ENCODE measurements at regions of chr6 and their contacts with region 1.

Region 1: GRCh38 chr6:28683944-28684538 is 158.4 kb downstream of the GPX5 start:
- DNase-seq: peak in 7 of 9 donors; percentile 17 to 50 (median 40)
- ATAC-seq: peak; percentile 80
- H3K4me3 ChIP-seq: no peak overlapping the region
- H3K4me3 Mint-ChIP-seq: no peak overlapping the region
- H3K27ac ChIP-seq: no peak overlapping the region
- H3K27ac Mint-ChIP-seq: no peak overlapping the region
- H3K4me1 ChIP-seq: no peaks in the 10 kb centered on the region
- H3K4me1 Mint-ChIP-seq: peaks cover 0 to 17% (median 0%) of the 10 kb centered on the region in 7 donors
- H3K27me3 ChIP-seq: no peaks in the 10 kb centered on the region
- H3K27me3 Mint-ChIP-seq: peaks cover 66 to 89% (median 80%) of the 10 kb centered on the region in 5 donors

Region 2: DNA sequence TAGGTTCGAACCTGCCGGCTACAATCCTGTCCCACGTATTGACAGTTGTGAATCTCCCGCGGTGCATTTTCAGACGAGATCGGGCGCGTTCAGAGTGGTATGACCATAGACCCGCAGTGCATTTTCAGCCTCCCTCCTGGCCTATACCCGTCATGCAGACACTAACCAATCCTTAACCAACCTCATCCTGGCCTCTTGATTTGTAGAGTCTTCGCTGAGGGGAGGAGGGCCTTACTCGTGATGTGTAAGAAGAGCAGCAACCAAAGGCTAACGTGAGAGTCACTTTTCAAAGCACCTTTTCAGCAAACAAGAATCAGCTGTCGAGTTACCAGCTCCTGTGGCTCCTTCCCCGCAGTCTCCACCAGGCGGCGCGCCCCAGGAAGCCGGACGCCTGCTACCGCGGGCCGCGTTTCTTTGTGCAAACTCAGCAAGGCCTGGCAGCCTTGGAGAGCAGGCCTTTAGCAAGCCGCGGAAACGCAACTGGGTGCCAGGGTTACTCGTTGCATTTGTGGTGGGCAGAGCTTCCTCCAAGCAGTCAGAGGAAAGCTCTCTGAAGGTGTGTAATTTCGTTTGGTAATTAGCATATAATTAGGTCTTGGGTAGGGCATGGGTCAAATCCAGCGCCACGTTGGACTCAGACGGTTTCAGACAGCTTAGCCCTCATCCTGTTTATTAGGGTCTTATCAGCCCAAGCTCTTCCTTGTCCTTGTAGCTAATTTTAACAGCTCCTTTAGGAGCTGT is 911.6 kb before region 1 on chr6:
- CTCF ChIA-PET with region 1: no interaction called
- POLR2A ChIA-PET with region 1: no interaction called
- intact Hi-C with region 1: loop called in 1 of 2 experiments (anchors 5 kb)
- DNase-seq: peak; percentile 72 to 88 (median 82)
- ATAC-seq: peak; percentile 98
- H3K4me3 ChIP-seq: no peak overlapping the region
- H3K4me3 Mint-ChIP-seq: peak overlapping the region in 6 of 10 donors; percentile 14 to 59 (median 34)
- H3K27ac ChIP-seq: no peak overlapping the region
- H3K27ac Mint-ChIP-seq: peak overlapping the region in 2 of 9 donors; percentile 7 to 8
- H3K4me1 ChIP-seq: peaks cover 3 to 5% of the 10 kb centered on the region in 2 donors
- H3K4me1 Mint-ChIP-seq: peaks cover 6 to 20% (median 7%) of the 10 kb centered on the region in 7 donors
- H3K27me3 ChIP-seq: no peaks in the 10 kb centered on the region
- H3K27me3 Mint-ChIP-seq: peaks cover 1 to 35% (median 10%) of the 10 kb centered on the region in 5 donors

Region 3: DNA sequence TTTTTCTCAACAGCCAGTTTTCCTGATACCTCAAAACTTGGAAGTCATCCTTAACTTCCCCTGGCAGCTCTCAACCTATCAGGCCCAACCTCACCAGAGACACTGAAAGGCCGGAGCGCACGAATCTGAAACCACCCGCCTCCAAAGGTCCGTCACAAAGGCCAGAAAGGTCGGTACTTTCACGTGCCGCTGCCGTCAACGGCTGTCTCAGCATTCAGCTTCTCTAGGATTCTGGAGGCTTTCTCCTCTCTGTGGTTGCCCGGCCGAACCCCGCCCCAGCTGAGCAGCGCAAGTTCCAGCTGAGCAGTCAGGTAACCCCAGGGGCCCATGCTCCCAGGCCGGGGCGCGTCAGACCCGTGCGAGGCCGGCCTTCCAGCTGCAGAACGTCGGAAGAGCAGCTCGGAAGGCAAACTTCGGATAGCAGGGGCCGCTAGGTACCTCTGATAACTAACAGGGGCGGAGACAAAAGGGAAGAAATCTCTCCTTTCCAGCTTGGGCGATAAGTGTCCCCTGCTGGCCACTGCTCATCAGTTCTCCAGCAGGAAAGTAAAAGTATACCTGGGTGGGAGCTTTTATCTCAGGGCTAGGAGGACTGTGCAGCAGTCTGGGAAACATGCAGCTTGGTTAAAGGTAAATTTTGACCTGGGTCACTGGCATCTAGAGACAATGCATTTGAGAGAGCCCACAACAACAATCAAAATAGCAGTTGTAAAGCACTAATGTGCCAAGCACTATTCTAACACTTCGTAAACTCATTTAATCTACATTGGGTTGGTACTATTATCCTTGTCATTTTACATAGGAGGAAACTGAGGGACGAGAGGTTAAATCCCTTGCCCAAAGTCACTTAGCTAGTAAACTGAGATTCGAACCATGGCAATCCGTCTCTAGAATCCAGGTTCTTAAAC is 300.6 kb before region 1 on chr6:
- CTCF ChIA-PET with region 1: no interaction called
- POLR2A ChIA-PET with region 1: no interaction called
- intact Hi-C with region 1: no loop called
- DNase-seq: peak in 8 of 9 donors; percentile 7 to 45 (median 24)
- ATAC-seq: peak; percentile 92
- H3K4me3 ChIP-seq: peak overlapping the region; percentile 22
- H3K4me3 Mint-ChIP-seq: peak overlapping the region; percentile 76 to 86 (median 82)
- H3K27ac ChIP-seq: no peak overlapping the region
- H3K27ac Mint-ChIP-seq: peak overlapping the region in 7 of 9 donors; percentile 24 to 83 (median 40)
- H3K4me1 ChIP-seq: no peaks in the 10 kb centered on the region
- H3K4me1 Mint-ChIP-seq: peaks cover 15 to 54% (median 34%) of the 10 kb centered on the region in 7 donors
- H3K27me3 ChIP-seq: no peaks in the 10 kb centered on the region
- H3K27me3 Mint-ChIP-seq: no peaks in the 10 kb centered on the region

Region 4: DNA sequence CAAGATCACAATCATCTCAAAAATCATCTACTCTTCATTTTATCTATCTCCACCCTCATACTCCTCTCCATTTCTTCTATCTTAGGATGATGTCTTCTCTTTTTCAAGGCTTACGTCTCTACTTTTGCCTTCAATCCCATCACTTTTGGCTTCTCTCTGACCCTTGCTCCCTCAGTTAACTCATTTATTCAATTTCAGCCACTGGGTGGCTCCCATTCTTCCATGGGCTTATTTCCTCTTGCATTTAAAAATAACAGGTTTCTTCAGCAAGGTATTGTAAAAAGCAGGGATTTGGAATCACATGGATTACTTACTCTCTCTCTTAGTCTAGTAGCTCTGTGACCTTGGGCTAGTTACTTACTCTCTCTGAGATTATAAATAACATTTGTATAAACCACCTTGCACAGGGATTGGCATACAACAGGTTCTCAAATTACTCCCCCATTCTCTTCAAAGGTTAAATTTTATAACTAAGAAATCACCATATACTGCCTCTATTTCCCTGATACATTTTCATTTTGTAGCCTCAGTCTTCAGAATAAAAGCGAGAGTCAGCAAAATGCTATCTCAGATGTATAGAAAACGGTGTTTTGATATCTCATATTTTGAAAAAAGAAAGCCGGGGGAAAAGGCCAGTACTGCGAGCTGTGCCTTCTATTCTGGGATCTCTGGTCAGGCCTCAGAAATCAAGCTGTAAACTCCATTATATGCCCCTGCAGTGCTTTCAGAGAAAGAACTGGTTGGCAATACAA is 290.0 kb before region 1 on chr6:
- CTCF ChIA-PET with region 1: no interaction called
- POLR2A ChIA-PET with region 1: no interaction called
- intact Hi-C with region 1: loop called in 1 of 2 experiments (anchors 1 kb)
- DNase-seq: peak in 2 of 9 donors; percentile 12 to 18
- ATAC-seq: no peak
- H3K4me3 ChIP-seq: no peak overlapping the region
- H3K4me3 Mint-ChIP-seq: no peak overlapping the region
- H3K27ac ChIP-seq: no peak overlapping the region
- H3K27ac Mint-ChIP-seq: peak overlapping the region in 1 of 9 donors; percentile 4
- H3K4me1 ChIP-seq: peaks cover 8 to 23% of the 10 kb centered on the region in 2 donors
- H3K4me1 Mint-ChIP-seq: peaks cover 32 to 64% (median 53%) of the 10 kb centered on the region in 7 donors
- H3K27me3 ChIP-seq: no peaks in the 10 kb centered on the region
- H3K27me3 Mint-ChIP-seq: no peaks in the 10 kb centered on the region

Region 5: DNA sequence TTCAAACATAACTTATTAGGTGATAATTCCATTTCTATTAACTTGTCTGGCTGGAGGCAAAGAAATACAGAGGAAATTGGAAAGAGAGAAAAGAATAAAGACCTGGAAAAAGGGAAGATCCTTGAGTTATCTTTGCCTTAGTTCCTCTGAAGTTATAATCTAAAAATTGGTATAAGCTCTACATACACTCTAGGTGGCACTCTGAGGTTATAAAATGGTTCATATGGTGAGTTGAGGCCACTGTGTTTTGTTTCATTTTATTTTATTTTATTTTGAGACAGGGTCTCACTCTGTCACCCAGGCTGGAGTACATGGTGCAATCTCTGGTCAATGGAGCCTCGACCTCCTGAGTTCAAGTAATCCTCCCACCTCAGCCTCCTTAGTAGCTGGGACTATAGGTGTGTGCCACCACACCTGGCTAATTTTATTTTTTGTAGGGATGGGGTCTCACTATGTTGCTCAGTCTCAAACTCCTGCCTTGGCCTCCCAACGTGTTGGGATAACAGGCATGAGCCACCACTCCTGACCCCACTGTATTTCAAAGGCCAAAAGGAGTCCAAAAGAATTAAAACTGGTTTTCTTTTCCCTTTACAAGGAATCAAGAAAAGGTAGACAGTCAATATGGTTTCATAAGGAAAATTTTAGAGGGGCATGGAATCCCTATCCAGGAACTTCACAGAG is 187.8 kb before region 1 on chr6:
- CTCF ChIA-PET with region 1: interaction called, 8 read pairs
- POLR2A ChIA-PET with region 1: no interaction called
- intact Hi-C with region 1: loop called in 1 of 2 experiments (anchors 1 kb)
- DNase-seq: peak in 2 of 9 donors; percentile 17 to 25
- ATAC-seq: no peak
- H3K4me3 ChIP-seq: no peak overlapping the region
- H3K4me3 Mint-ChIP-seq: no peak overlapping the region
- H3K27ac ChIP-seq: no peak overlapping the region
- H3K27ac Mint-ChIP-seq: no peak overlapping the region
- H3K4me1 ChIP-seq: no peaks in the 10 kb centered on the region
- H3K4me1 Mint-ChIP-seq: peaks cover 0 to 8% (median 0%) of the 10 kb centered on the region in 7 donors
- H3K27me3 ChIP-seq: no peaks in the 10 kb centered on the region
- H3K27me3 Mint-ChIP-seq: peaks cover 9 to 52% (median 43%) of the 10 kb centered on the region in 5 donors

Region 6: GRCh38 chr6:28988536-28989311 is 304.7 kb after region 1 on chr6:
- CTCF ChIA-PET with region 1: no interaction called
- POLR2A ChIA-PET with region 1: no interaction called
- intact Hi-C with region 1: loop called in 1 of 2 experiments (anchors 1 kb)
- DNase-seq: peak; percentile 57 to 77 (median 71)
- ATAC-seq: peak; percentile 93
- H3K4me3 ChIP-seq: peak overlapping the region; percentile 53
- H3K4me3 Mint-ChIP-seq: peak overlapping the region; percentile 79 to 88 (median 84)
- H3K27ac ChIP-seq: no peak overlapping the region
- H3K27ac Mint-ChIP-seq: peak overlapping the region in 7 of 9 donors; percentile 28 to 82 (median 32)
- H3K4me1 ChIP-seq: peaks cover 0 to 5% of the 10 kb centered on the region in 2 donors
- H3K4me1 Mint-ChIP-seq: peaks cover 7 to 38% (median 32%) of the 10 kb centered on the region in 7 donors
- H3K27me3 ChIP-seq: no peaks in the 10 kb centered on the region
- H3K27me3 Mint-ChIP-seq: peaks cover 0 to 53% (median 15%) of the 10 kb centered on the region in 5 donors

Region 7: GRCh38 chr6:29589423-29590048 is 905.5 kb after region 1 on chr6:
- CTCF ChIA-PET with region 1: interaction called, 3 read pairs
- POLR2A ChIA-PET with region 1: no interaction called
- intact Hi-C with region 1: loop called (anchors 1 kb)
- DNase-seq: peak; percentile 14 to 62 (median 48)
- ATAC-seq: peak; percentile 80
- H3K4me3 ChIP-seq: no peak overlapping the region
- H3K4me3 Mint-ChIP-seq: no peak overlapping the region
- H3K27ac ChIP-seq: no peak overlapping the region
- H3K27ac Mint-ChIP-seq: no peak overlapping the region
- H3K4me1 ChIP-seq: no peaks in the 10 kb centered on the region
- H3K4me1 Mint-ChIP-seq: peaks cover 0 to 6% (median 0%) of the 10 kb centered on the region in 7 donors
- H3K27me3 ChIP-seq: peaks cover 0 to 5% of the 10 kb centered on the region in 2 donors
- H3K27me3 Mint-ChIP-seq: peaks cover 11 to 38% (median 28%) of the 10 kb centered on the region in 5 donors

Measured in naive thymus-derived CD4-positive, alpha-beta T cell (primary cell).